ENCODE measurements at regions of chr13 and their contacts with region 1.

Region 1: DNA sequence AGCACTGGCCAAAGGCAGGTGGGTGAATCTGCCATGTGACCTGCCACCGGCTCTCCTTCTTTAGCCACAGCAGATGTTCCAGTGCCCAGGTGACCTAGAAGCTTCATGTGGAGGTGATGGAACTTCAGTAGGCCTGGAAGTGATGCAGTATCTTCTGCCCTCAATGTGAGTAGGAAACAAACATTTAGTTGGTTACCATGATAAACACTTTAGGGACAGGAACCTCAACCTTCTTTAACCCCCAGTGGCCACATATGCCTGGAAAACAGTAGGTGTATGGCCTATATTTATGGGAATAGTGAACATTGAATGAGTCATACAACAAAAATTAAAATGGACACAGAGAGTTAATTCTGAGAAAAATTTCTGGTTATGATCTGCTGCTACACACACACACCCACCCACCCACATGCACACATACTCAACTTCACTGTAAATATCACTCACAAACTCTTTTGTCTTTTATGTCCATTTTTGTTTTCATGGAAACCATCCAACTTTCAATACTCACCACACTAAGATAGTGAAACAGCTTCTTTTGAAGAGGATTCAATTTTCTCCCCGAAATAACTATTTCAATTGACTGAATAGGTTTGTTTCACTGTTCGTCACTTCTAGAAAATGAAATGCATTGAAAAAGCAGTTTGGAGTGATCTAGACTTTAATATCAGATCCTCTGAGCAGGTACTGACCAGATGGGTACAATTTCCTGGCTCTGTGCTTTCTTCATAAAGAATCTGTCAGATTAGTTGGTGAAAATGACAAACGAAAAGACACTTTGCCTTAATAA is 97.3 kb downstream of the STARD13 start:
- DNase-seq: no peak
- H3K4me3 Mint-ChIP-seq: peak overlapping the region; percentile 34
- H3K27ac Mint-ChIP-seq: peak overlapping the region; percentile 99
- H3K4me1 Mint-ChIP-seq: peaks cover 52% of the 10 kb centered on the region
- H3K27me3 Mint-ChIP-seq: no peaks in the 10 kb centered on the region

Region 2: GRCh38 chr13:31686670-31687425 is 1501.4 kb before region 1 on chr13:
- intact Hi-C with region 1: no loop called
- DNase-seq: no peak
- H3K4me3 Mint-ChIP-seq: no peak overlapping the region
- H3K27ac Mint-ChIP-seq: no peak overlapping the region
- H3K4me1 Mint-ChIP-seq: no peaks in the 10 kb centered on the region
- H3K27me3 Mint-ChIP-seq: no peaks in the 10 kb centered on the region

Region 3: GRCh38 chr13:32917504-32917903 is 270.8 kb before region 1 on chr13:
- intact Hi-C with region 1: loop called (anchors 1 kb)
- DNase-seq: no peak
- H3K4me3 Mint-ChIP-seq: no peak overlapping the region
- H3K27ac Mint-ChIP-seq: peak overlapping the region; percentile 5
- H3K4me1 Mint-ChIP-seq: peaks cover 18% of the 10 kb centered on the region
- H3K27me3 Mint-ChIP-seq: no peaks in the 10 kb centered on the region

Region 4: GRCh38 chr13:33072283-33072682 is 116.0 kb before region 1 on chr13:
- intact Hi-C with region 1: loop called (anchors 2 kb)
- DNase-seq: peak; percentile 3
- H3K4me3 Mint-ChIP-seq: no peak overlapping the region
- H3K27ac Mint-ChIP-seq: peak overlapping the region; percentile 55
- H3K4me1 Mint-ChIP-seq: peaks cover 35% of the 10 kb centered on the region
- H3K27me3 Mint-ChIP-seq: no peaks in the 10 kb centered on the region

Region 5: GRCh38 chr13:33132644-33133440 is 55.4 kb before region 1 on chr13:
- intact Hi-C with region 1: loop called (anchors 1 kb)
- DNase-seq: no peak
- H3K4me3 Mint-ChIP-seq: no peak overlapping the region
- H3K27ac Mint-ChIP-seq: peak overlapping the region; percentile 80
- H3K4me1 Mint-ChIP-seq: peaks cover 8% of the 10 kb centered on the region
- H3K27me3 Mint-ChIP-seq: no peaks in the 10 kb centered on the region

Region 6: GRCh38 chr13:33204130-33204927 is 16.0 kb after region 1 on chr13:
- intact Hi-C with region 1: loop called (anchors 1 kb)
- DNase-seq: no peak
- H3K4me3 Mint-ChIP-seq: peak overlapping the region; percentile 78
- H3K27ac Mint-ChIP-seq: peak overlapping the region; percentile 76
- H3K4me1 Mint-ChIP-seq: peaks cover 65% of the 10 kb centered on the region
- H3K27me3 Mint-ChIP-seq: no peaks in the 10 kb centered on the region

Measured in activated T-helper 1 cell treated with anti-CD3 and anti-CD28 coated beads, Interleukin-12 subunit alpha, Interleukin-12 subunit beta, Interleukin-2, Interleukin-4 antibody, amounts not matched to agents 30 ng/mL and 10 ng/mL and 1 ng/mL, durations not matched to agents 14 hours and 24 hours and 36 hours (primary cell).